MCF 10A (cell line): ENCODE measurements at regions of chr10 and their contacts with region 1.

Region 1: GRCh38 chr10:117174439-117175214 is 22.7 kb upstream of the KCNK18 start:
- DNase-seq: peak; percentile 89
- H3K4me3 Mint-ChIP-seq: peak overlapping the region; percentile 71
- H3K27ac Mint-ChIP-seq: no peak overlapping the region
- H3K4me1 Mint-ChIP-seq: no peaks in the 10 kb centered on the region
- H3K27me3 Mint-ChIP-seq: peaks cover 33% of the 10 kb centered on the region
- CTCF ChIP-seq: peak; percentile 78

Region 2: DNA sequence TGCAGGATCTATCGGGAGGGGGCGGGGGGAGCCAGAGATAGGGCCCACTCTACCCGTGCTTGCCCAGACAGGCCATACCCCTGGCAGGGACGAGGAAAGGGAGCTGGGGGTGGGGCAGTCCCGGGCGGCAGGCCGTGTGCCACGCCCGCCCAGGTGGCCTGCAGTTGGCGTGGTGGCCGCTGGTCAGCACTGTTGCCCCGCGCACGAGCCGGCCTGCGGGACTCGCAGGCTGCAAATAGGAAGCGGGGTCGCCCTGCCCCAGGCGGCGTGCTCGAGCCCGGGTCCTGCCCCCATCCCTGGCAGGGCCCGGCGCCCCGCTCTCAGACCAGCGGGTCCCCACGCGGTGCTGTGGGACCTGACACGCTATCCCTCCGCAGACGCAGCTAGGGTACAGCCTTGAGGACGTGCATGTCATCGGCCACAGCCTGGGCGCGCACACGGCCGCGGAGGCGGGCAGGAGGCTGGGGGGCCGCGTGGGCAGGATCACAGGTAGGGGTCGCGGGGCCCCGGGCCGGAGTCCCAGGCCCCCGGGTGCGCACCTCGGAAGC is 547.2 kb before region 1 on chr10:
- CTCF ChIA-PET with region 1: interaction called, 4 read pairs
- POLR2A ChIA-PET with region 1: no interaction called
- intact Hi-C with region 1: loop called (anchors 5 kb)
- DNase-seq: peak; percentile 8
- H3K4me3 Mint-ChIP-seq: no peak overlapping the region
- H3K27ac Mint-ChIP-seq: no peak overlapping the region
- H3K4me1 Mint-ChIP-seq: no peaks in the 10 kb centered on the region
- H3K27me3 Mint-ChIP-seq: peaks cover 5% of the 10 kb centered on the region
- CTCF ChIP-seq: no peak

Region 3: DNA sequence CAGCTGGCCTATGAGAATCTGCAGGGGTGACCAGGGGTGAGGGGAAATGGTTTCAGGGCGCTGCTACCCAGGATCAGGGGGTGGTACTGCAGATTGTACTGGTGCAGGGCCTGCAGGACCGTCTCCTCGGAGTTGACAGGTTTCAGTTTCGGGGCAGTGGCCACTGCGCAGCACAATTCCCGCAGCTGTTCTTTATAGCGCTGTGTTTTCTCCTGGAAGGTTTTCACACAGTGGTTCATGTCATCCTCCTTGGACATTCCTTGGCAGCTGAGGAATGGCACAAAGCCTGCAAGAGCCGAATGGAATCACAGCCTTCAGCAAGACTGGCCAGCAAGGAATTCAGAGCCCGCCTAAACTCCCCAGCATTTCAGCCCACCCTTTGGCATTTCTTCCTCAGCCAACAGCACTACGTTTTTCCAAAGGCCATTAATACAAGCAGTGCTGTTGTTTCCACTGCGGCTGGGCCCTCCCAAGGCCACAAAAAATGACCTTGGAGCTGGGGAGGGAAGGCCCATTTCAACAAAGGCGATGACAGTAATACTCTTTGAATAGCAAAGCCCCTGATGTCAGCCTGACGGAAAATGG is 509.0 kb before region 1 on chr10:
- CTCF ChIA-PET with region 1: no interaction called
- POLR2A ChIA-PET with region 1: no interaction called
- intact Hi-C with region 1: no loop called
- DNase-seq: no peak
- H3K4me3 Mint-ChIP-seq: no peak overlapping the region
- H3K27ac Mint-ChIP-seq: no peak overlapping the region
- H3K4me1 Mint-ChIP-seq: no peaks in the 10 kb centered on the region
- H3K27me3 Mint-ChIP-seq: no peaks in the 10 kb centered on the region
- CTCF ChIP-seq: no peak

Region 4: GRCh38 chr10:116690356-116691322 is 484.0 kb before region 1 on chr10:
- CTCF ChIA-PET with region 1: interaction called, 15 read pairs
- POLR2A ChIA-PET with region 1: no interaction called
- intact Hi-C with region 1: no loop called
- DNase-seq: no peak
- H3K4me3 Mint-ChIP-seq: no peak overlapping the region
- H3K27ac Mint-ChIP-seq: no peak overlapping the region
- H3K4me1 Mint-ChIP-seq: no peaks in the 10 kb centered on the region
- H3K27me3 Mint-ChIP-seq: no peaks in the 10 kb centered on the region
- CTCF ChIP-seq: no peak

Region 5: DNA sequence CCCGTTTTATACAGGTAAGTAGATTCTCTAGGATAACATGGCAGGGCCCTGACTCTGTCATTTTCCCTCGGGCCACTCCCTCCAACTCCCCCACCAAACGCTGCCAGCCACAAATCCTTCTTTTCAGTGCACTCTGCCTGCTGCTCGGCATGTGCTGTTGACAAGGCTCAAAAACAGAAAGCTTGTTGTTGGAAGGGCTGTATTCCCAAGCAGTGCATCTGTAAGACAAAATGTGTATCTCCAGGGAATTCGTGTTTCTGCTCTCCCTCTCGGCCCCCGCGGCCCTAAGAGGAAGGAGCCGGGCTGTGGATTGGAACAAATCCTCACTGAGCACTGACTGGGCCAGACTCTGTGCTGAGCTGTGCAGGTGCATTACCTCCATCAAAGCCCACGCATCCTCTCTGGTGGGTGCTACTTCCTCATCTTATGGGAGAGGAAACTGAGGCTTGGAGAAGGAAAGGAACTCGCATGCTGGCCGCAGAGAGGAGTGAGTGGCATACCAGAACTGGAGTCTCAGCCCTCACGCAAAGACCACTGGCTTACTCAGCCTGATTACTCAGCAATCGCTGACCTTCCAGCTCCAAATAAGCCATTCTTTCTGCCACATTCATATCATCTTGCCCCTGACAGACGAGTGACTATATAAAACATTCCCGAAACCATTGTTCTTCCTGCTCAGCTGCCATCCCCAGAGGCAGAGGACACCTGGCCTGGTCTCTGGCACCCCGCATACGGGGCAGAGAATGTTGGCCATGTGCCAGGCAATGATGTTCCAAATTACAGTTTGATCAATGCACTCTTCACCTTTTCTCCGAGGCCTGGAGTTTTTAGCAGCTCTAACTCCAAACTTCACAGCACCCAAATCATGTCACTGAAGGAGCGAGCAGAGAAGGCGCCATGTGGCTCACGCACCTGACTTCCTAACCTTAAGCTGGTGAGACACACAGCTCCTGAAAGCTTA is 358.7 kb before region 1 on chr10:
- CTCF ChIA-PET with region 1: interaction called, 15 read pairs
- POLR2A ChIA-PET with region 1: no interaction called
- intact Hi-C with region 1: no loop called
- DNase-seq: no peak
- H3K4me3 Mint-ChIP-seq: no peak overlapping the region
- H3K27ac Mint-ChIP-seq: no peak overlapping the region
- H3K4me1 Mint-ChIP-seq: no peaks in the 10 kb centered on the region
- H3K27me3 Mint-ChIP-seq: peaks cover 32% of the 10 kb centered on the region
- CTCF ChIP-seq: no peak

Region 6: DNA sequence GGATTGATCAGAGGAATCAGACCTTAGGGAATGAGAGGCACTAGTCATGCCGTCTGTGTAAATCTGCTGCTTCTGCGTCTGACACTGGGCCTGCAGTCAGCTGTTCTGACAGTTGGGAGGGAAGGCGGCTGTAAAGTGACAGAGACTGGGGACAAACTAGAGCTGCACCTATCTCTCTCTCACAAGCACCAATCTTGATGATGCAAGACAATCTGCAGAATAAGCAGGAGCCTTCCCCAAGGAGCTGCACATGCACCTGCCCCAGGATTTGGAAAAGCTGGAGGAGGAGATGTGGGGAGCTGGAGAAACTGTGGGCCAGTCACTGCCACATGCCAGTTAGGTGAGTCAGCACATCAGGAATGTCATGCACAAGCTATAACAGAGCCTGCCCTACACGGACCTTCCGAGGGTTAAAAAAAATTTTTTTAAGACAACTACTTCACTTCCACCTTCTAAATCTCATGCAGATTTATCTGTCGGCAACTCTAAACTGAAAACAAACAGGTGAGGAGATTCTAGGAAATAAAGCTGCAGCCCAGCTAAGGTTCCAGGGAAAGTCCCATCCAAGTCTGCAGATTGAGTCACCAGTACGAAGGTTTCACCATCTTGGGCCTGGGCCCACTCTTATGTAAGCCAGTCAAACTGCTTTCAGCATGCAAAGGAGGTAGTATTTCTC is 286.1 kb before region 1 on chr10:
- CTCF ChIA-PET with region 1: interaction called, 4 read pairs
- POLR2A ChIA-PET with region 1: interaction called, 4 read pairs
- intact Hi-C with region 1: loop called (anchors 2 kb)
- DNase-seq: peak; percentile 93
- H3K4me3 Mint-ChIP-seq: peak overlapping the region; percentile 16
- H3K27ac Mint-ChIP-seq: no peak overlapping the region
- H3K4me1 Mint-ChIP-seq: peaks cover 27% of the 10 kb centered on the region
- H3K27me3 Mint-ChIP-seq: no peaks in the 10 kb centered on the region
- CTCF ChIP-seq: no peak

Region 7: GRCh38 chr10:117112220-117112619 is 62.4 kb before region 1 on chr10:
- CTCF ChIA-PET with region 1: interaction called, 10 read pairs
- POLR2A ChIA-PET with region 1: no interaction called
- intact Hi-C with region 1: loop called (anchors 5 kb)
- DNase-seq: peak; percentile 22
- H3K4me3 Mint-ChIP-seq: no peak overlapping the region
- H3K27ac Mint-ChIP-seq: no peak overlapping the region
- H3K4me1 Mint-ChIP-seq: no peaks in the 10 kb centered on the region
- H3K27me3 Mint-ChIP-seq: peaks cover 25% of the 10 kb centered on the region
- CTCF ChIP-seq: peak; percentile 35

Region 8: DNA sequence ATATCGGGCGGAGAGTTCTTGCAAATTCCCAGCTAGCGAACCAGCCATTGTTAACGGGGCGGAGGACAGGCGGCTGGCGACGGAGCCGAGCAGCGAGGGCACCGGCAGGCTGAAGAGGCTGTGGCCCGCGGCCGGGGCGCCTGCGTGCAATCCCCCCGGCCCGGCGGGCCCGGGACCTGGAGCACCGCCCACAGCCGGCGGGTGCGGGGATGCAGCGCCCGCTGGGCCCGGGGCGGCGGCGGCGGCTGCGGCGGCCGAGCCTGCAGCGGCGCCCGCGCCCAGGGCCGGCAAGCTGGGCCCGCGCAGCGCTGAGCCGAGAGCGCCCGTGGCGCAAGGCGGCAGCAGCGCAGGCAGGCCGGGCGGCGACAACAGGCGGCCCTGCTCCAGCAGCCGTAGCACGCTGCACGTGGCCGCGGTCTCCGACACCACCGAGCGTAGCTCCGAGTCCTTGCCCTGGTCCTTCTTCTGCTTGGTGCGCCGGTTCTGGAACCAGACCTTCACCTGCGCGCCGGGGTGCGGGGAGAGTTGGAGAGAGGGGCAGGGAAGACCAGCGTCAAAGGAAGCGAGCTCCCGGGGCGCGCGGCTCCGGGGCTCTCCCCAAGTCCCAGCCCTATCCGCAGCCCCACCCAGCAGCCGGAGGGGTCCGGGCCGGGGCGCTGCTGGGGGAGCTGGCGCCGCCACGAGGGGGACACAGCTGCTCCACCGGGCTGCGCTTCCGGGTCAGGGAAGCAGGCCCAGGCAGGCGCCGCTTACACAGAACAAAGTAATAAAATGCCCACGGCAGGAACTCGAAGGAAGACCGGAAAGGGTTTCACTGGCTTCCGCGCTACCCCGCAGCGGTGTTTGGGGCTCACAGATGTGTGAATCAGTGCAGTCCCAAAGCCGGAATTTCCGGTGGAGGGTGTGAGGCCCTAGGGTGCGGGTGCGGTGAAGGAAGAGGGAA is 40.3 kb before region 1 on chr10:
- CTCF ChIA-PET with region 1: no interaction called
- POLR2A ChIA-PET with region 1: no interaction called
- intact Hi-C with region 1: no loop called
- DNase-seq: no peak
- H3K4me3 Mint-ChIP-seq: no peak overlapping the region
- H3K27ac Mint-ChIP-seq: no peak overlapping the region
- H3K4me1 Mint-ChIP-seq: no peaks in the 10 kb centered on the region
- H3K27me3 Mint-ChIP-seq: peaks cover 37% of the 10 kb centered on the region
- CTCF ChIP-seq: no peak

Region 9: DNA sequence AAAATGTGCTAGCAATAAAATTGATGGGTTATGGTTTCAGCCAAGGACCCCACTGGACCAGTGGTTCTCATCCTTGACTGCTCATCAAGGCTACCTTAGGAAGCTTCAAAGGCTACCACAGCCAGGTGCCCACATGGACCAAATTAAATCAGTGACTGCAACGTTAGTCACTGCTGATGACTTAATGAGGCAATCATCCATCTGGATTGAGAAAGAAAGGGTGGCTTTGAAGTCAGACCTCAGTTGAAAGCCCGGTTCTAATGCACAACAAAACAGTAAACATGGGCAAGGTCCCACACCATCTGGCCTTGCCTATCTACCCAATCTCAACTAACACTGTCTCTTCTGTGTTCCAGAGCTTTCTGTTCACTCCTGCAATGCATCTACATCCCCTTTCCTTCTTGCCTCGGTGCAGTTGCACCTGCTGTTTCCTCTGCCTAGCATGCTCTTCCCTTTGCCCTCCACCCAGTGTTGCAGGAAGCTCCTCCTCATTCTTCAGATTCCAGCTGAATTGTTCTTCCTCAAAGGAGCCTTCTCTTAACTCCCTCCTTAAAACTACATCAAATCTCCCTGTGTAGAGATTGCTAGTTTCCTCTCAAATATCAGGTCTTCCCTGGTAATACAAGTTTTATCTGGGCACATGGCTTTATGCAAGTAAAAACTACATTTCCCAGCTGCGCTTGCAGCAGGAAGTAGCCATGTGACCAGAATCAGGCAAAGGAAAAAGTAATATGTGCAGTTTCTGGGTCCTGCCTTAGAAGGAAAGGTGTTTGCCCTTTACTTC is 12.4 kb after region 1 on chr10:
- CTCF ChIA-PET with region 1: interaction called, 39 read pairs
- POLR2A ChIA-PET with region 1: interaction called, 4 read pairs
- intact Hi-C with region 1: no loop called
- DNase-seq: peak; percentile 79
- H3K4me3 Mint-ChIP-seq: no peak overlapping the region
- H3K27ac Mint-ChIP-seq: peak overlapping the region; percentile 3
- H3K4me1 Mint-ChIP-seq: peaks cover 8% of the 10 kb centered on the region
- H3K27me3 Mint-ChIP-seq: no peaks in the 10 kb centered on the region
- CTCF ChIP-seq: no peak